ENCODE measurements at regions of chr9 and their contacts with region 1.

Region 1: DNA sequence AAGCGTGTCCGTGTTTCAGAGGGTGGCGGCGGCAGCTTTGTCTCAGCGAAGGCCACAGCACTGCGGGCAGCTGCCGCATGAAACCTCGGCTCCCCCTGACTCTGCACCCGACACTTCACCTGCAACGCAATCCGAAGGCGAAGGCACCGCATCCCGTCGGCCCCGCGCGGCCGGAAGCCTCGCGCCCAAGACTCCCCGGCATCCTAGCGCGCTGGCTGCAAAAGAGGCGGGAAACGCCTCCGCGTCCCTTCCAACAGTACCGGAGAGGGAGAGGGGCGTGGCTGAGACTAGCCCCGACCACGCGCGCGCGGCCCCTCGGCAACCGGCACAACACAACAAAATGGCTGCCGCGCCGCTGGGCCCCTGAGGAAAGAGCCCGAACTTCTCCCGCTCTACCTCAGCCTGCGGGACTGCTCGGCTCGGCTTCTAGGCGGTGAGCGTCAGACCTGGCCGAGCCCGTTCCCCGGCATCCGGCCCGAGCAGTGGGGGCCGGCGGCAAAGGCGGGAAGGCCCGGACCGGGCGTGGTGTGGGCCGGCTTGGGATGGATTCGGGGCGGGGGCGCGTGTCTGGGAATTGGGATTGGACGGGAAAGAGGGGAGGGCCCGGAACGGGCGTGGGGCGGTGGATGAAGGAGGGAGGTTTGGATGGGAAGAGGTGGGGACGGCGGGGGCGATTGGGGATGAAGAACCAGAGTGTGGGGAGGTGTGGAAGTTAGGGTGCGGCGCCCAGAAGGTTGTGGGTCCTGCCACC is at the start of gene CNTRL:
- DNase-seq: peak; percentile 76 to 91 (median 86)
- H3K4me3 ChIP-seq: peak within 1 kb of the TSS; percentile 51 to 94 (median 81)
- H3K27ac ChIP-seq: peak within 1 kb of the TSS; percentile 55 to 96 (median 91)
- H3K27me3 ChIP-seq: no peaks in the 10 kb centered on the region
- CTCF ChIP-seq: peak in 22 of 56 donors; percentile 5 to 40 (median 27)
- total RNA-seq, gene CNTRL: 12.3 to 35.3 (median 21.4) TPM

Region 2: DNA sequence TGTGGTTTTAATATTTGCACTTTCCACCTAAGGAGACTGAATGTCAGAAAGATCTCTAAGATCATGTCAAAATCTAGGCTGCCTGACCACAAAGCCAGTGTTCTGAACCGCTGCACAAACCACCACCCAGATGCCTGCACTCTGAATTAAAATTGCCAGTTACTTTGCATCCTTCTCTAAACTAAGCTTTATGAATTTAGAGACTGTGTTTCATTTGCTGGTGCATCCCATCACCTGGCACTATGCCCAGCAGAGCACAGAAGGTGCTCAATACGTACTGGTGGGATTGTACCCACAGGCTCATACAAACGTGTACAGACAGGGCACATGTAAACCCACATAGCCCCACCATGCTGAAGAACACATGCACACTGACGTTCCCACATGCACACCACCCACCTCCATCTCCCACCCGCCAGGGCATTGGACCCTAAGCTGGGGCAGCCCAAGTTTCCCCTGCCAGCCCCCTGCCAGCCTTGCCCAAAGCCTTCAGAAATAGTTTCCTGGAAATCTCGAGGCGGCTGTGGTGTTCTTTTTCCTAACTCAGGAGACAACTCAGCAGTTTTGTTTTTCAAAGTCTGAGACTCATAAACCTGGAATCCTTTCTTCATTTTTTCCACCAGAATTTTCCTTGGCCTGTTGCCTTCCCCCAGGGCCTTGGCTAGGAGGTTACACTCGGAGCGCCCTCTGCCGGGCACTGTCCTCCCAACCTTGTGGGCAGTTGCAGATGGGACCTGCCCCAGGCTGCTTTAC is 138.6 kb before region 1 on chr9:
- intact Hi-C with region 1: loop called in 1 of 2 experiments (anchors 5 kb)
- DNase-seq: peak; percentile 87 to 93 (median 90)
- H3K4me3 ChIP-seq: peak overlapping the region in 10 of 59 donors; percentile 0 to 25 (median 14)
- H3K27ac ChIP-seq: peak overlapping the region; percentile 57 to 95 (median 88)
- H3K27me3 ChIP-seq: no peaks in the 10 kb centered on the region
- CTCF ChIP-seq: peak; percentile 72 to 97 (median 92)

Region 3: GRCh38 chr9:121121582-121122087 is 46.8 kb after region 1 on chr9:
- intact Hi-C with region 1: loop called (anchors 2 to 10 kb)
- DNase-seq: peak; percentile 91 to 98 (median 96)
- H3K4me3 ChIP-seq: peak overlapping the region; percentile 30 to 73 (median 58)
- H3K27ac ChIP-seq: peak overlapping the region in 47 of 59 donors; percentile 1 to 73 (median 38)
- H3K27me3 ChIP-seq: no peaks in the 10 kb centered on the region
- CTCF ChIP-seq: peak in 47 of 56 donors; percentile 15 to 61 (median 42)

Region 4: GRCh38 chr9:121201738-121202533 is 127.1 kb after region 1 on chr9 and contains the start of gene RAB14:
- intact Hi-C with region 1: loop called in 1 of 2 experiments (anchors 2 kb)
- DNase-seq: peak; percentile 98 to 99 (median 99)
- H3K4me3 ChIP-seq: peak within 1 kb of the TSS; percentile 68 to 98 (median 88)
- H3K27ac ChIP-seq: peak within 1 kb of the TSS; percentile 47 to 98 (median 92)
- H3K27me3 ChIP-seq: no peaks in the 10 kb centered on the region
- CTCF ChIP-seq: peak; percentile 29 to 86 (median 68)
- total RNA-seq, gene RAB14: 57.6 to 139 (median 99.3) TPM